Endothelial cell of umbilical vein (primary cell): ENCODE measurements at regions of chr11 and their contacts with region 1.

Region 1: DNA sequence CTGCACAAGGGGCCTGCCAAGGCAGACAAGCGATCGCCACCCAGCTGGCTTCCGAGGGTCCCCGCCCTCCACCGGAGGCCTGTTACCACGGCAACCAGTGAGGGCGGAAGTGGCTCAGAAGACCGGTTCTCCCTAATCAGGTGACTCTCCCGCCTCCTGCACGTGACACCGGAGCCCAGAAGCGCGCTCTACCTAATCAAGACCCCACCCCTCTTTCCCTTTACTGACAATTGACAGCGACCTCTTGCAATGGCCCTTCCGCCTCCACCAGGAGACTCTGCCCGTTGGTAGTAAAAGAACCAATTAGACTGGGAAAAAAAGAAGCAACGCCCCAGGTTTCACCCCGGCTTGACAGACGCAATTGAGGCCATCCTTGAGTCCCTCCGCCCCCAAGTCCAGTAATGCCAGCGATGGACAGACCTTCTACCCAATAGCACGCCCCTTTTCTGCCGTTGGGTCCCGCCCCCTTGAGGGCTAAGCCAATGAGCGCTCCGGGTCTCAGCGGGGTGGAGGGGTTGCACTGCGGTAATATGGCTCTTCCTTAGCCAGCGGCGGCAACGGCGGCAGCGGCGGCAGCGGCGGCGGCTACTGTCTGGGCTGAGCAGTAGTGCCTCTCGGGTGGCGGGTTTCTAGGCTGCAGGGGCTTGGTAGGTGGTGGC is at the start of gene UVRAG:
- DNase-seq: peak; percentile 100
- H3K4me3 ChIP-seq: peak within 1 kb of the TSS; percentile 90 to 95 (median 93)
- H3K27ac ChIP-seq: peak within 1 kb of the TSS; percentile 88
- H3K4me1 ChIP-seq: peaks cover 35% of the 10 kb centered on the region
- H3K27me3 ChIP-seq: no peaks in the 10 kb centered on the region
- CTCF ChIP-seq: no peak
- POLR2A ChIP-seq: peak; percentile 82
- total RNA-seq, gene UVRAG: 65.6 and 67.3 TPM in 2 replicates

Region 2: GRCh38 chr11:75474878-75475766 is 339.7 kb before region 1 on chr11:
- CTCF ChIA-PET with region 1: no interaction called
- POLR2A ChIA-PET with region 1: no interaction called
- dilution Hi-C with region 1: no loop called
- intact Hi-C with region 1: no loop called
- DNase-seq: no peak
- H3K4me3 ChIP-seq: no peak overlapping the region
- H3K27ac ChIP-seq: no peak overlapping the region
- H3K4me1 ChIP-seq: peaks cover 26% of the 10 kb centered on the region
- H3K27me3 ChIP-seq: no peaks in the 10 kb centered on the region
- CTCF ChIP-seq: no peak
- POLR2A ChIP-seq: no peak

Region 3: DNA sequence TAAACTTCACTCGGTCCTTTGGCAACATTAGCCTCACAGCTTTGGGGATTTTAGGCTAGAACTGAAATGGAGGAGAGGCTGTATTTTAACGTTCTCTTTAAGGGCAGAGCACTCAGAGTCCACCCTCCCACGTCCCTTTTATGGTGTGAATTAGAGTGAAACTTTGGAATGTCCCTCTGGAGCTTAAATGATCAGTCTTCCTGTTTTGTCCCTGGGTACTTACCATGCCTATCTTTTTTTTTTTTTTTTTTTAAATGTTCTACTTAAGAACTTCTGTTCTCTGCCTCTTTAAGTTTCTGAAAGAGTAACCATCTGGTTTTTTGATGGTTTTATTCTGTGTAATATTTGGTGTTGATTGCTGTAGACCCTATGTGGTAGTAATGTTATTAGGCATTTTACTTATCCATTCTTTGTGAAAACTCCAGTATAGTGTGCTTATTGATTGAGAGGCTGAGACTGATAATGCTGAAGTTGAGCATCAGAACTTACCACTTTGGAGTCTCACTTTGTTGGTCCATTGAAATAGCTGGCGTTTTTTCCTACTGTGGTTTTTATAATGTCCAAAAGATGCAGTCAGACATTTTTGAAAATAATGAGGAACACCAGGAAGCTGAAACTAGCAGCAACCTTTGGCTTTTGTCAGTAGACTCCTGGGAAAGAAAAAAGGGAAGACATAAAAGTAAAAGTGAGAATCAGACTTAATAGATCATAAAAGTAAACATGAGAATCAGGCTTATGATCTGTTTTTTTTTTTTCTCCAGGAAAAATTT is 11.8 kb after region 1 on chr11:
- CTCF ChIA-PET with region 1: interaction called, 28 read pairs
- POLR2A ChIA-PET with region 1: interaction called, 18 read pairs
- dilution Hi-C with region 1: no loop called
- intact Hi-C with region 1: loop called (anchors 1 kb)
- DNase-seq: peak; percentile 84
- H3K4me3 ChIP-seq: peak overlapping the region in 1 of 3 experiments; percentile 1
- H3K27ac ChIP-seq: peak overlapping the region; percentile 90
- H3K4me1 ChIP-seq: peaks cover 56% of the 10 kb centered on the region
- H3K27me3 ChIP-seq: no peaks in the 10 kb centered on the region
- CTCF ChIP-seq: no peak
- POLR2A ChIP-seq: no peak

Region 4: DNA sequence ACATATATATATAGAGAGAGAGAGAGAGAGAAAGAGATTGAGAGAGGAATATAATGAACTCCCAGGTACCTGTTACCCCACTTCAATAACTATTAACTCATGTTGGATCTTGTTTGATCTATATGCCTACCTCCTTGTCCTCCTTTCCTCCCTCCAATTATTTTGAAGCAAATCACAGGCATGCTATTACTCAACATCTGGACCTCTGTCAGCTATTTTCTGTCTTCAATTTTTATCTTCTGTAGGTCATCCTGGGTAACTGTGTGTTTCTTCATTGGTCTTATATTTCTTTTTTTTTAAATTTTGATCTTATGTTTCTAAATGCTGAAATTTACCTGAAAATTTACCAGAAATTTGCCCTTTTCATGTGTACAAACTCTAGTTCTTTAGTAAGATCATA is 25.0 kb after region 1 on chr11:
- CTCF ChIA-PET with region 1: no interaction called
- POLR2A ChIA-PET with region 1: no interaction called
- dilution Hi-C with region 1: no loop called
- intact Hi-C with region 1: no loop called
- DNase-seq: no peak
- H3K4me3 ChIP-seq: no peak overlapping the region
- H3K27ac ChIP-seq: no peak overlapping the region
- H3K4me1 ChIP-seq: peaks cover 5% of the 10 kb centered on the region
- H3K27me3 ChIP-seq: no peaks in the 10 kb centered on the region
- CTCF ChIP-seq: no peak
- POLR2A ChIP-seq: no peak

Region 5: DNA sequence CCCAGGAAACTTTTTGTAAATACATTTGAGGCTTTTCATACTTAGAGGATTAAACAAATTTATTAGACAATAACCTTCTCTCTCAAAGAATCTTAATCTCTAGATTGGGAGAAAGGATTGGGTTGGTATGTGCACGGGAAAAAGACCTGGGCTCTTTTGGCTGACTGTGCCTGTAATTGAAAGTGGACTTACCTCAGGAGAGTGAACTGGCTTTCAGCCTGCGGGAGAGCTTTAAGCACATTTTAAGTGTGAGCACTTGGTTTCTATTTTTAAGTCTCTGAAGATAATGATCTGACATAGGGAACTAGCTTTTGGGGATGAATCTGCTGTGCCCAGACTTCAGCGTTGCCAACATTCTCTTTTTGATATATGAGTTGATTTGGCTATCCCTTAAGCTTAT is 36.0 kb after region 1 on chr11:
- CTCF ChIA-PET with region 1: interaction called, 12 read pairs
- POLR2A ChIA-PET with region 1: interaction called, 3 read pairs
- dilution Hi-C with region 1: no loop called
- intact Hi-C with region 1: loop called (anchors 5 kb)
- DNase-seq: peak; percentile 23
- H3K4me3 ChIP-seq: no peak overlapping the region
- H3K27ac ChIP-seq: peak overlapping the region; percentile 20
- H3K4me1 ChIP-seq: peaks cover 22% of the 10 kb centered on the region
- H3K27me3 ChIP-seq: no peaks in the 10 kb centered on the region
- CTCF ChIP-seq: no peak
- POLR2A ChIP-seq: no peak